ENCODE measurements at regions of chr6 and their contacts with region 1.

Region 1: GRCh38 chr6:32868257-32868788 is 14.3 kb downstream of the PSMB9 start:
- DNase-seq: peak; percentile 73 to 81
- ATAC-seq: peak in 7 of 8 donors; percentile 42 to 88 (median 79)
- H3K4me3 ChIP-seq: no peak overlapping the region
- H3K27ac ChIP-seq: no peak overlapping the region
- H3K4me1 ChIP-seq: peaks cover 0 to 16% (median 0%) of the 10 kb centered on the region in 9 donors
- H3K27me3 ChIP-seq: peaks cover 0 to 13% (median 0%) of the 10 kb centered on the region in 7 donors
- CTCF ChIP-seq: peak; percentile 87 to 97 (median 94)

Region 2: DNA sequence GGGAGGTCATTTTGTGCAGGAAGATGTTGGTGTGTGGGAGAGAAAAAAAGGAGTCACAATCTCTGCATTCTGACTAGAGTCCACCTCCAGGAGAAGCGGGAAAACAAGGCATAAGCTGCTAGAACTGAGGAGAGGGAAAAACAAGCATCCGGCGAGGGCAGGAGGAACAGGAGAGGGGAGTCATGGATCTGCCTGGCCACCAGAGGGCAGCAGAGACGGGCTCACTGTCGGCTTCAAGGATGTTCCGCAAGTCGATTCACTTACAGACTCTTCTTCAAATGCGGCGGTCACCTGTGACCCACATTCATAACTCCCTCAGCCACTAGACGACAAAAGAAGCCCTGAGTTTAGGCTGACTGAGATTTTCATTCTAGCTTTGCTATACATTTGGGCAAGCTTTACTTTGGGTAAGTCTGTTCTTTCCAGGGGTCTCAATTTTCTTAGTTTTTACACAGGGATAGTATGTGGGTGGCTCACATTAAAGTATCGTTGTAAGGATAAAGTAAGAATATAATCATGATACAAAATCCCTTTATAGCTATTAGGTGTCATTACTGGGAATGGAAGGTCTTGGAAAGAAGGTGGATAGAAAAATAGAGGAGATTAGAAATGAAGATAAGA is 454.8 kb before region 1 on chr6:
- intact Hi-C with region 1: loop called in 6 of 10 experiments (anchors 5 to 10 kb)
- DNase-seq: peak; percentile 72 to 84
- ATAC-seq: peak; percentile 57 to 90 (median 81)
- H3K4me3 ChIP-seq: no peak overlapping the region
- H3K27ac ChIP-seq: no peak overlapping the region
- H3K4me1 ChIP-seq: peaks cover 0 to 12% (median 4%) of the 10 kb centered on the region in 9 donors
- H3K27me3 ChIP-seq: peaks cover 0 to 74% (median 54%) of the 10 kb centered on the region in 7 donors
- CTCF ChIP-seq: peak; percentile 85 to 98 (median 96)

Region 3: DNA sequence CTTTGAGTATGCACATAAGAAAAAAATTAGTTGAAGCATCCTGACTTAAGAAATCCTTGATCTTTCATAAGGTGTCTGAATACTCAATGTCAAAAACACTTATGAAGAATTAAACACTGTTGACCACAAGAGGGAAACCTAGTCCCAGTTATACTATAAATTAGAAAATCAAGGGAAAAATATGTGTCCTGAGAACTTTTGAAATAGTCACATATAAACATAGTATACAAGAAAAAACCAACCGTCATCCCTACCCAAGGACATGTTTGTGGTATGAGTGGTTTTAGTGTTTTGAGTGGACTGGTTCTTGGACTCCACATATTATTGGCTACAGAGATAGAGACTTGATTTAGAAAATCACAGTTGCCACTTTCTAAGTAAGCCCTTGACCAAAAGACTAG is 436.3 kb before region 1 on chr6:
- intact Hi-C with region 1: loop called in 1 of 10 experiments (anchors 5 kb)
- DNase-seq: no peak
- ATAC-seq: no peak
- H3K4me3 ChIP-seq: no peak overlapping the region
- H3K27ac ChIP-seq: no peak overlapping the region
- H3K4me1 ChIP-seq: peaks cover 0 to 4% (median 0%) of the 10 kb centered on the region in 9 donors
- H3K27me3 ChIP-seq: peaks cover 0 to 8% (median 0%) of the 10 kb centered on the region in 7 donors
- CTCF ChIP-seq: peak in 8 of 9 donors; percentile 17 to 67 (median 60)

Region 4: DNA sequence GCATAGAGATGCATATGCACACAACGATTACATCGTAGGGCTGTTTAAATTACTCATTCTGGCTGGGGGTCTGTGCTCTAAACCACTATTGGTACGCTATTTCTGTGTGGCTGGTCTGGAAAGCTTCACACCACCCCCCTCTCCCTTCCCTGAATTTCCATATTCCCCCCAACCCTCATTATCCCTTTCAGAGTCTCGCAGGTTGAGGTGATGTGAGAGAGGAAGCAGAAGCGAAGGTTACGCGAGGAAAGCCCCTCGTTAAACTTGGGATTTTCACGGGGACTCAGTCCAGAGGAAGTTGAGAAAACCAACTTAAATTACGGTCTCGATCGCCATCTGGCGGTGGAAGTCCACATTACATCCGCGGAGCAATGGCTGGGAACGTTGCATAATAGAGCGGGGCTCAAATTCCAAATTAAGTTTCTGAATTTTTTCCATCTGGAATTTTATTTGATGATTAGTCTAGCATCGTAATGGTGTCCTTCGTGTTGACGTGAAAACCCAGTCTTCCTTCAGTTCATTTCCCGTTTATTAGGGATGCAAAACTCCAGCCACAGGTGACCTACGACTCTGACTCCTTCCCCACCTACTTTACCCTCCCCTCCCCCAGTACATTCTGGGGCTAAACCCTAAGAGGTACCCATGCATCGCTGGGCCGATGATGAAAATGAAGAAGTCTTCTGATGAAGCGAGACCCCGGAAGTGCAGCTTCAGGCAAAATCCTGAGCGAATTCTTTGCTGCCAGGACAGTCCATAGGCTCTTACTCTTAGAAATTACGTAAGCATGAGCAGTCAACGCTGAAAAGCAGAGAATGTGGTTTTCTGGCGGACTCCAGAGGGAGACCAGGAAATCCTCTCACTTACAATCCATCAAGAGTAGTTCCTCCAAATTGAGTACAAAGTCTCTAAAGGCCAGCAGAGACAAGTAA is 71.2 kb before region 1 on chr6:
- intact Hi-C with region 1: loop called in 1 of 10 experiments (anchors 2 kb)
- DNase-seq: peak; percentile 73 to 78
- ATAC-seq: peak; percentile 71 to 90 (median 76)
- H3K4me3 ChIP-seq: peak overlapping the region in 4 of 10 donors; percentile 18 to 30 (median 26)
- H3K27ac ChIP-seq: peak overlapping the region in 1 of 10 donors; percentile 7
- H3K4me1 ChIP-seq: peaks cover 0 to 38% (median 3%) of the 10 kb centered on the region in 9 donors
- H3K27me3 ChIP-seq: peaks cover 0 to 91% (median 41%) of the 10 kb centered on the region in 7 donors
- CTCF ChIP-seq: peak; percentile 74 to 90 (median 86)

Region 5: GRCh38 chr6:32825966-32826365 is 42.4 kb before region 1 on chr6:
- intact Hi-C with region 1: loop called in 9 of 10 experiments (anchors 5 kb)
- DNase-seq: no peak
- ATAC-seq: peak in 7 of 8 donors; percentile 34 to 89 (median 69)
- H3K4me3 ChIP-seq: no peak overlapping the region
- H3K27ac ChIP-seq: peak overlapping the region in 6 of 10 donors; percentile 0 to 57 (median 49)
- H3K4me1 ChIP-seq: peaks cover 0 to 22% (median 0%) of the 10 kb centered on the region in 9 donors
- H3K27me3 ChIP-seq: no peaks in the 10 kb centered on the region
- CTCF ChIP-seq: peak in 8 of 9 donors; percentile 24 to 62 (median 57)

Region 6: GRCh38 chr6:32838114-32838958 is 30.0 kb before region 1 on chr6 and contains the start of gene TAP2:
- intact Hi-C with region 1: loop called in 8 of 10 experiments (anchors 1 to 5 kb)
- DNase-seq: peak; percentile 96 to 97
- ATAC-seq: peak; percentile 96 to 99 (median 97)
- H3K4me3 ChIP-seq: peak within 1 kb of the TSS; percentile 63 to 86 (median 76)
- H3K27ac ChIP-seq: peak within 1 kb of the TSS; percentile 84 to 96 (median 94)
- H3K4me1 ChIP-seq: peaks cover 0 to 68% (median 33%) of the 10 kb centered on the region in 9 donors
- H3K27me3 ChIP-seq: no peaks in the 10 kb centered on the region
- CTCF ChIP-seq: peak; percentile 90 to 99 (median 97)
- total RNA-seq, gene TAP2: 8.8 to 92.1 (median 13.8) TPM

Region 7: DNA sequence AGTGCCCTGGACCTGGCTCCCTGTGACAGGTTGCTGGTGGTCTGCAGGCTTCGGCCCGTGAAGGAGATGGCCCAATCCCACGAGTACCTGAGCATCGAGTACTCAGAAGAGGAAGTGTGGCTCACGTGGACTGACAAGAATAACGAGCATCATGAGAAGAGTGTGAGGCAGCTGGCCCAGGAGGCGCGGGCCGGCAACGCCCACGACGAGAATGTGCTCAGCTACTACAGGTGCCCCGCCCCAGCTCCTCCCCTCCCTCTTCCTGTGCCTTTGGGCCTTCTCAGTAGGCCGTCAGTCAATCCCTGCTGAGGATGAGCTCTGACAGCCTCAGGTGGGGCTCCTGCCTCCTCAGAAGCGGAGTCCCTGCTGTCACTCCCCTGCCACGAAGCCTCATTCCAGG is 800.6 kb after region 1 on chr6:
- intact Hi-C with region 1: no loop called
- DNase-seq: no peak
- ATAC-seq: no peak
- H3K4me3 ChIP-seq: no peak overlapping the region
- H3K27ac ChIP-seq: no peak overlapping the region
- H3K4me1 ChIP-seq: peaks cover 0 to 13% (median 8%) of the 10 kb centered on the region in 9 donors
- H3K27me3 ChIP-seq: no peaks in the 10 kb centered on the region
- CTCF ChIP-seq: no peak